Brain microvascular endothelial cell (primary cell): ENCODE measurements at regions of chr14 and their contacts with region 1.

Region 1: DNA sequence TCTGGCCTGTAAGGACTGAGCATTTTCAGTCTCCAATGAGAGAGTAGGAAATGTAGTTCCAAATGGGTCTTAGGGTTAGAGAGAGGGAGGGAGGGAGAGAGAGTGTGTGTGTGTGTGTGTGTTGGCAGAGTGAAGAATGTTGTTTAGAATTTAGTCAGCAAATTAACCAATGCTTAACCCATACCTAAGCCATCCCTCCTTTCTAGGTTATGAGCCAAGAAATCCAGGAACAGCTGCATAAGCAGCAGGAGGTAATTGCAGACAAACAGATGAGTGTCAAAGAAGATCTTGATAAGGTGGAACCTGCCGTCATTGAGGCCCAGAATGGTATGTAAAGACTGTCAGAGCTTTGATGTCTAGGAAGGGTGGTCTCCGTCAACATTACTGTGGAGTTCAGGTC is 56.9 kb downstream of the HSP90AA1 start:
- DNase-seq: peak; percentile 63
- H3K4me3 ChIP-seq: no peak overlapping the region
- H3K27ac ChIP-seq: no peak overlapping the region
- H3K27me3 ChIP-seq: no peaks in the 10 kb centered on the region
- CTCF ChIP-seq: no peak

Region 2: GRCh38 chr14:101426466-101426865 is 603.5 kb before region 1 on chr14:
- in situ Hi-C with region 1: no loop called
- DNase-seq: no peak
- H3K4me3 ChIP-seq: no peak overlapping the region
- H3K27ac ChIP-seq: no peak overlapping the region
- H3K27me3 ChIP-seq: no peaks in the 10 kb centered on the region
- CTCF ChIP-seq: no peak

Region 3: GRCh38 chr14:101707068-101707842 is 322.7 kb before region 1 on chr14:
- in situ Hi-C with region 1: no loop called
- DNase-seq: peak; percentile 66
- H3K4me3 ChIP-seq: no peak overlapping the region
- H3K27ac ChIP-seq: no peak overlapping the region
- H3K27me3 ChIP-seq: no peaks in the 10 kb centered on the region
- CTCF ChIP-seq: peak; percentile 74

Region 4: DNA sequence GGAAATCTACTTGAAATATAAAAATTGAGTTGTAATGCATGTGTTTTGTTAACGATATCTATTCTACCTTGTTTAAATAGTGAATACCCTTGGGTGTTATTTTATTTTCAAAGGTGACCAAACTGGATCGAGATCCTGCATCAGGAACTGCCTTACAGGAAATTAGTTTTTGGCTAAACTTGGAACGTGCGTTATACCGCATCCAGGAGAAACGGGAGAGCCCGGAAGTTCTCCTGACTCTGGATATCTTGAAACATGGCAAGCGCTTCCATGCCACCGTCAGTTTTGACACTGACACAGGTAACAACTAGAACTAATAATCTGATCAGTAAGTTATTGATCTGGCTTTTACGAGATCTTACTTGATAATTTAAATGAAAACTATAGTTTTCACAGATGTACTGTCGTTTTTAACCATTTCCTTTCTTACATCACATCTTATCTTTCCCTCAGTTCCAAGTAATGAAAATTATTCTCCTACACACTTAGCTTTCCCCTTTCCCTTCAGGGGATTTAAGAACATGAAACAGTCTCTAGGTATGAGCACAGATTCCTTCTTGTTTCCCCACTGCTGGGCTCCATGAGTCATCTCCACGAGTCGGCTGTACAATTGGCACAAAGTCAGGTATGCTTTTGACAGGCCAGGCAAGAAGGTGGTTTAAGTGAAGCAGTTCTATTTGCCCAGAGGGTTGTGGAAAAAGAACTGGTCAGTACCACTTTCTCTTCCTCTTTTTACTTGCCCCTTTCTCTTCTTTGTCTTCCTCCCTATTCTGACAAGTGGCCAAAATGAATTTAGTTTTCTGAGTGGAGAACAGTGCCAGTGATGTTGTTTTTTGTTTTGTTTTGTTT is 49.5 kb before region 1 on chr14:
- in situ Hi-C with region 1: loop called (anchors 10 kb)
- DNase-seq: peak; percentile 92
- H3K4me3 ChIP-seq: no peak overlapping the region
- H3K27ac ChIP-seq: peak overlapping the region; percentile 54
- H3K27me3 ChIP-seq: no peaks in the 10 kb centered on the region
- CTCF ChIP-seq: no peak

Region 5: DNA sequence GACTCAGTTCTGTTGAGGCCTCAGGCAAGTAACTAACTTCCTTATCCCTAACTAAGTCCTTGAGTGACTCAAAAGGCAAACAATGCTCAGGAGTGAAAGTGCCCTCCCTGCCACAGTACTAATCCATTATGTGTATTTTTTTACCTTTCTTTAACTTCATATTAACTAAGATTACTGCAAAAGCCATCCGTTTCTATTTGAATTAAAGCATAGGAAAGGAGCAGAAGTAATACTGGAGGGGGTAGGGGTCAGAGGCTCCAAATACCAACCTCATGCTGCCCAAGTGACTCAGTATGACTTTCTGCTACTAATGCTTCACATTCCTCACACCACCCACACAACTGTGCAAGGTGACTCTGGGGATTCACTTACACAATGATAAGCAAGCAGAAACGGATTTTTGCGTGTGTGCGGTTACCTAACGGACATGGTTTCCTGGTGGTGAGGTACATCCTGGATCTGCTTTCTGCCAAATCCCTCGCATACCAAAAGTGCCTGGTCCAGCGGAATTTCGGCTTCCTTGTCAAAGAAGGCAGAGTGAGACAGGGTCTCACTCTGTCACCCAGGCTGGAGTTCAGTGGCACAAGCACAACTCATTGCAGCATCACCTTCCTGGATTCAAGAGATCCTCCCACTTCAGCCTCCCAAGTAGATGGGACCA is 249.9 kb after region 1 on chr14:
- in situ Hi-C with region 1: no loop called
- DNase-seq: peak; percentile 99
- H3K4me3 ChIP-seq: no peak overlapping the region
- H3K27ac ChIP-seq: peak overlapping the region; percentile 98
- H3K27me3 ChIP-seq: no peaks in the 10 kb centered on the region
- CTCF ChIP-seq: no peak